ENCODE measurements at regions of chr18 and their contacts with region 1.

Region 1: GRCh38 chr18:34297287-34297686 is 72.6 kb upstream of the NOL4 start:
- DNase-seq: no peak
- H3K4me3 ChIP-seq: no peak overlapping the region
- CTCF ChIP-seq: no peak

Region 2: DNA sequence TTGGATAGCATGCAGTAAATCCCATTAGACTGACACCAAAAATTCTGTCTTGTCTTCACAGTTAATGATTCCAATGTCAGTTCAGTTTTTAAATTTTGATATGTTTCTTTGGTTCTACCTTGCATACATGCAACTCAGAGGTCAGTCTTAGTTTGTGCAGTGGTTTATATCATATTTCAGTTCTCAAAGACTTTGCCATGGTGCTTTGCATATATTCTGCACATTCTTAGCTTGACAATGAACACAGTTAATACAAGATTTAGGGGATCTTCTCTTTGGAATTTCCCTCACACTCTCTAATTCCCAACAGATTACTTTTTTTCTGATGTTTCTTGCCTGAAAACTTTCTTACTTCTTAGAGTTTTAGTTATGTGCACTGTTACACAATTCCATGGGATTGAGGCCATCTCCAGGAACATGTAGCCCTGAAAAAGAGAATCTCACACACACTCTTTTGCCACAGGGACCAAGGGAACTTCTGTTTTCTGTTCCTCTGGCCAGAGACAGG is 89.9 kb before region 1 on chr18:
- in situ Hi-C with region 1: loop called (anchors 5 kb)
- DNase-seq: no peak
- H3K4me3 ChIP-seq: no peak overlapping the region
- CTCF ChIP-seq: no peak

Region 3: DNA sequence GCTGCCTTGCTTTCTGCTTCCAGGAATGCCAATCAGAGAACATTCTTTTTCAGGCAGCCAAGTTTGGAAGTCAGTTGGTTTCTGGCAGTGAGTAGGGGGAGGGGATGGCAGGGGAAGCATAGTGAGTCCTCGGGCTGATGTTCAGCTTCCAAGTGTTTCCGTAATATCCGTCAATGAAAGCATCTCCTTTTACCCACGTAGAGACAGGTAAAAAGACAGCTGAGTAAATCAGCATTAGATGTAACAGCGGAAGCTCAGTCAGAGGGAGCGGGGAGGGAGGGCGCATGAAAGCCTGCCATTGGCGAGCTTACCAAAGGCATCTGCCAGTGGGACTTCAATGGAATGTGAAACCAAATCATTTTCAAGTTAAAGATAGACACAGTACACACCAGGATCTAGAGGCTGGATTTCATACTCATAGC is 295.7 kb after region 1 on chr18:
- in situ Hi-C with region 1: no loop called
- DNase-seq: peak; percentile 59
- H3K4me3 ChIP-seq: peak overlapping the region; percentile 46
- CTCF ChIP-seq: no peak